Activated CD8-positive, alpha-beta T cell treated with anti-CD3 and anti-CD28 coated beads, Interleukin-2, amount 10 ng/mL, durations not matched to agents 7 days and 5 days (primary cell): ENCODE measurements at regions of chr10 and their contacts with region 1.

Region 1: GRCh38 chr10:77837240-77837924 is 89.2 kb downstream of the DLG5 start:
- DNase-seq: peak; percentile 82
- ATAC-seq: peak; percentile 84
- H3K4me3 Mint-ChIP-seq: no peak overlapping the region
- H3K27ac Mint-ChIP-seq: peak overlapping the region; percentile 39
- H3K4me1 Mint-ChIP-seq: peaks cover 14% of the 10 kb centered on the region
- H3K27me3 Mint-ChIP-seq: no peaks in the 10 kb centered on the region

Region 2: GRCh38 chr10:77710759-77711682 is 126.4 kb before region 1 on chr10:
- CTCF ChIA-PET with region 1: interaction called, 17 read pairs
- POLR2A ChIA-PET with region 1: no interaction called
- DNase-seq: peak; percentile 76
- ATAC-seq: peak; percentile 99
- H3K4me3 Mint-ChIP-seq: no peak overlapping the region
- H3K27ac Mint-ChIP-seq: no peak overlapping the region
- H3K4me1 Mint-ChIP-seq: peaks cover 4% of the 10 kb centered on the region
- H3K27me3 Mint-ChIP-seq: peaks cover 41% of the 10 kb centered on the region

Region 3: GRCh38 chr10:77716482-77717317 is 120.7 kb before region 1 on chr10:
- CTCF ChIA-PET with region 1: interaction called, 28 read pairs
- POLR2A ChIA-PET with region 1: no interaction called
- DNase-seq: no peak
- ATAC-seq: no peak
- H3K4me3 Mint-ChIP-seq: no peak overlapping the region
- H3K27ac Mint-ChIP-seq: no peak overlapping the region
- H3K4me1 Mint-ChIP-seq: no peaks in the 10 kb centered on the region
- H3K27me3 Mint-ChIP-seq: peaks cover 31% of the 10 kb centered on the region

Region 4: GRCh38 chr10:77721815-77722214 is 115.6 kb before region 1 on chr10:
- CTCF ChIA-PET with region 1: interaction called, 28 read pairs
- POLR2A ChIA-PET with region 1: no interaction called
- DNase-seq: no peak
- ATAC-seq: no peak
- H3K4me3 Mint-ChIP-seq: no peak overlapping the region
- H3K27ac Mint-ChIP-seq: no peak overlapping the region
- H3K4me1 Mint-ChIP-seq: no peaks in the 10 kb centered on the region
- H3K27me3 Mint-ChIP-seq: peaks cover 17% of the 10 kb centered on the region

Region 5: DNA sequence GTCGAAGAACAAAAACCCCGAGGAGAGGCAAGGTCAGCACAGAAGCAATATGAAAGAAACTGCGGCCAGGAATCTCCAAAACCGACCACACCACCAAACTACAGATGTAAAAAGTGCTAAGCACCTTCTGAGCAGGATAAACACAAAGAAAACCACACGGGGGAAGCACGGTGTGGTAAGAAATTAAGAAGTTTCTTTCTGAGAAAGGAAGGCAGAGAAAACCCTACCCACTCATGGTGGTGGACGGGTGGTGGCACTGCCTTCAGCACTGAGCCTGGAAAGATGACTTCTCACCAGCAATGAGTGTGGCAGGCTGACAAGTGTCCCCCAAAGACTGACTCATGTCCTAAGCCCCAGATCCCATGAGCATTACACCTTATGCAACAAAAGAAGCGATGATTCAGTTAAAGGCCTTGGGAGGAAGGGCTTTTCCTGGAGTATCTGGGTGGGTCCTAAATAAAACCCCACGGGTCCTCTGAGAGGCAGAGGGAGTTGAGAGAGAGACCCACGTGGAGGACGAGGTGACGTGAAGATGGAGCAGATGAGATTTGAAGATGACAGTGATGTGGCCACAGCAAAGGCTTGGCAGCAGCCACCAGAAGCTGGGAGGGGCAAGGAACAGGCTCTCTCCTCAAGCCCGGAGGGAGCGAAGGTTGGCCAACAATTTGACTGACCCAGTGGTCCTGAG is 35.8 kb before region 1 on chr10:
- CTCF ChIA-PET with region 1: no interaction called
- POLR2A ChIA-PET with region 1: no interaction called
- DNase-seq: peak; percentile 76
- ATAC-seq: peak; percentile 84
- H3K4me3 Mint-ChIP-seq: peak overlapping the region; percentile 6
- H3K27ac Mint-ChIP-seq: peak overlapping the region; percentile 69
- H3K4me1 Mint-ChIP-seq: peaks cover 36% of the 10 kb centered on the region
- H3K27me3 Mint-ChIP-seq: peaks cover 35% of the 10 kb centered on the region